CD4-positive, alpha-beta memory T cell (primary cell): ENCODE measurements at regions of chr12 and their contacts with region 1.

Region 1: DNA sequence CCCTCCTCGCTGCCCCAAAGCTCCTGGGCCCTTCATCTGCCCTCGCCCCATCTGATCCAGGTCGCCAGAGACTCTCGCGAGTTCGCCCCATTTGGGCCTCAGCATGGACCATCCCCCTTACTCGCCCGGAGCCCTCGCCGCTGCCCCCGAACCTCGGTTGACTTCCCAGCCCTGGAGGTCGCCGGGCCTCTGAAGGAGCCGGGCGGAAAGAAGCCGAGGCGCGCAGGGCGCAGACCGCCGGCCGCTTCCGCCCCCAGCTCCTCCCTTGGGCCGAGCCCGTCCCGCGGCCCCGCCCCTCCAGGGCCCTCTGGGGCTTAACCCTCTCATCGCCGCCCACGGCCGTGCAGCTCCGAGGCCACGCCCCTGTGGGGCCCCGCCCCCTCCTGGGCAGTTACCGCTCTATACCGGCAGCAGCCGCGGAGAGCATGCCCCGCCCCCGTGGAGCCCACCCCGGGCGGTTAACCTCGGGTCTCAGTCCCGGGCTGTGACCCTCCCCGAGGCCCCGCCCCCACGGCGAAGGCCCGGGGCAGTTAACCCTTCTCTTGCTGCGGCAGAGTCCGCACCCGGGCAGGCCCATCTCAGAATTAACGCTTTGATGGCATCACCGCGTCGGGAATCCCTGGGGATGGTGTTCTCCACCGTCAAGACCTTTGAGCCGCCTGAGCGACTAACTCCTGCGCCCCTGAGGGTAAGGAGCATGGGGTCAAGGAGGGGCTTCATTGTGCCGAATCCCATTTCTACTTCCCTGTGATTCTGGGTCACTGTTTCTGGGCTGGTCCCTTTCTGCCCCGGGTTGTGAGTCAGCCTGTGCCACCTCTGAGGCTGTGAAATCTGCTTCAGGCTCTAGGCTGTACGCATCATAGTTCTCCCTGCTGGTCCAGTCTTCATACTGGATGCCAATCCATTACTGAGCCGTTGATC is at the start of gene SPSB2:
- DNase-seq: peak; percentile 97 to 98 (median 98)
- H3K4me3 ChIP-seq: peak within 1 kb of the TSS; percentile 93 to 99
- H3K4me3 Mint-ChIP-seq: peak within 1 kb of the TSS; percentile 90 to 93 (median 92)
- H3K27ac ChIP-seq: peak within 1 kb of the TSS; percentile 87
- H3K27ac Mint-ChIP-seq: peak within 1 kb of the TSS; percentile 90 to 96 (median 93)
- H3K4me1 ChIP-seq: peaks cover 45% of the 10 kb centered on the region
- H3K4me1 Mint-ChIP-seq: peaks cover 32 to 66% (median 49%) of the 10 kb centered on the region in 4 donors
- H3K27me3 ChIP-seq: no peaks in the 10 kb centered on the region
- H3K27me3 Mint-ChIP-seq: no peaks in the 10 kb centered on the region
- total RNA-seq, gene SPSB2: 19.8 to 21.9 TPM

Region 2: DNA sequence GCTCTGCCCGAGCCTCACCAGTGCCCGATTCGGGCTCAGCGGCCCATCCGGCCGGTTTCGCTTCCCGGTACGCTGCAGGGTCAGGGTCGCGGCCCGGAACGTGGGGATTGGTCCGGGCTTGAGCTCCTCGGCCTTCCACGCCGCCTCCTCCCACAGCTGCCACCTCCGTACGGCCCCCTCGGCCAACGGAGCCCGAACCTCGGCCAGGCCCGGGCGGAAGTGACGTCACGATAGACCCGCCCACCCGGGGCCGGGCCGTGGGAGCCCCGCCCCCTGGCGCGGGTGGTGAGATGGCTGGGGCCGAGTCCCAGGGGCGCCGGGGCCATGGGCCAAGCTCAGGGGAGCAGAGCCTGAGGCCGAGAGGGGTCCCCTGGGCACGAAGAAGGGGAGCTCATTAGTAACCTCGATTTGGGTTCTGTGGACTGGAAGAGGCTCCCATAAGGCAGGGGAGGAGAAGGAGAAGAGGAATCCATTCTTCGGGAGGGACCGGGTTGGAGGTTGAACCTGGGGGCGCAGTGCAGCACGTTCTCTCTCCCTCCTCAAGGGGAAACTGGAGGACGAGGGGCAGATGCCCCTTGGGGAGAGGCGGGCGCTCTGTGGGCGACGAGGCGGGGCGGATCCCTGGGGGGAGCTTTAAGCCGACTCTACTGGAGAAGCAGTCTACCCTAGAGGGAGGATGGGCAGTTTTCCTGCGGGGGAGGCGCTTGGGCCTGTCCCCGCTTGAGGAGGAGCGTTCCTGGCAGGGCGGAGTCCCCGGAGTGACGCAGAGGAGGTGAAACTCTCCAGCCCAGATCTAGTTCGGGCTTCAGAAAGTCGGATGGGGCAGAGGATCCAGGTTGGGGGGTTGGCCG is 120.2 kb before region 1 on chr12 and contains the start of gene MLF2:
- CTCF ChIA-PET with region 1: interaction called, 10 read pairs
- POLR2A ChIA-PET with region 1: interaction called, 19 read pairs
- intact Hi-C with region 1: loop called (anchors 1 kb)
- DNase-seq: peak; percentile 96 to 98 (median 97)
- H3K4me3 ChIP-seq: peak within 1 kb of the TSS; percentile 62 to 77
- H3K4me3 Mint-ChIP-seq: peak within 1 kb of the TSS; percentile 94 to 98 (median 96)
- H3K27ac ChIP-seq: peak within 1 kb of the TSS; percentile 84
- H3K27ac Mint-ChIP-seq: peak within 1 kb of the TSS; percentile 99 to 100 (median 99)
- H3K4me1 ChIP-seq: peaks cover 13% of the 10 kb centered on the region
- H3K4me1 Mint-ChIP-seq: peaks cover 10 to 24% (median 17%) of the 10 kb centered on the region in 4 donors
- H3K27me3 ChIP-seq: no peaks in the 10 kb centered on the region
- H3K27me3 Mint-ChIP-seq: peaks cover 0 to 1% of the 10 kb centered on the region in 2 donors
- total RNA-seq, gene MLF2: 79.8 to 80.3 TPM

Region 3: GRCh38 chr12:6833189-6833890 is 40.0 kb before region 1 on chr12:
- CTCF ChIA-PET with region 1: interaction called, 10 read pairs
- POLR2A ChIA-PET with region 1: interaction called, 10 read pairs
- intact Hi-C with region 1: no loop called
- DNase-seq: no peak
- H3K4me3 ChIP-seq: no peak overlapping the region
- H3K4me3 Mint-ChIP-seq: peak overlapping the region in 1 of 8 donors; percentile 25
- H3K27ac ChIP-seq: no peak overlapping the region
- H3K27ac Mint-ChIP-seq: no peak overlapping the region
- H3K4me1 ChIP-seq: peaks cover 16% of the 10 kb centered on the region
- H3K4me1 Mint-ChIP-seq: peaks cover 2 to 12% (median 7%) of the 10 kb centered on the region in 4 donors
- H3K27me3 ChIP-seq: peaks cover 8% of the 10 kb centered on the region
- H3K27me3 Mint-ChIP-seq: peaks cover 1 to 8% of the 10 kb centered on the region in 2 donors

Region 4: DNA sequence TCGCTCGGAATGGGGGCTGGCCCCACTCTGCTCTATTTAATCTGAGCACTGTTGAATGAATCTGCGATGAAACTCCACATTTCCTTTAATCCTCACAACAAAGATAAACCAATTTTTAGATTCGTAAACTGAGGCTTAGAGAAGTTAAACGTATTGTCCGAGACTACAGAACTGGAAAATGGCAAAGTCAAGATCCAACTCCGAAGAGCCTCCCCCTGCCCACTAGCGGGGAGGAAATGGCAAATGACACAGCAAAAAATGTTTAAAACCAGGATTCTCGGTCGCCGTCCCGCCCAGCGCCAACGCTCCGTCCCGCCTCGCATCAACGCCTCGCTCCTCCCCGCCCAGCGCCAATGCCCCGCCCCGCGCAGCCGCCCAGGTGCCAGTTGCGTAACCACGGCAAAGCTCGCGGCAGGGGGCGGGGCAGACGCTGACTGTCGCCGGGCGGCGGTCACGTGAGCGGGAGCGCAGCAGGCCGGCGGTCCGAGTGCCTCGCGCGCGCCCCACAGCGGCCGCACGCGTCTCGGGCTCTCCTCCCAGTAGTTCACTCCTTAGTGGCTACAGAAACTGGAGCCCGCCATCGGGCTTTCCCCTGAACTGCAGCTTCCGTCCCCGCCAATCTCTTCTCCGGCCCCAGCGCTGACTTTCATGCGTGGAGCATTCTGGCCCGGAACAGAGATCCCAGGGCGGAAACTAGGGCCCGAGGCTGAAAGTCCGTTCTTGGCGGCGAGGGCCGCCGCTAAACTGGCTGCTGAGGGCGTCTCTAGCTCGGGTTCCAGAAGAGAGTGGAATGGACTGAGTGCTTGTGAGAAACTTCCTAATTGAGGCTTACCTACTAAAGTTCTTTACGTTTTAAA is 17.7 kb after region 1 on chr12:
- CTCF ChIA-PET with region 1: interaction called, 151 read pairs
- POLR2A ChIA-PET with region 1: interaction called, 133 read pairs
- intact Hi-C with region 1: loop called (anchors 1 kb)
- DNase-seq: peak; percentile 97 to 98 (median 98)
- H3K4me3 ChIP-seq: peak overlapping the region; percentile 74 to 93
- H3K4me3 Mint-ChIP-seq: peak overlapping the region; percentile 82 to 87 (median 85)
- H3K27ac ChIP-seq: peak overlapping the region; percentile 91
- H3K27ac Mint-ChIP-seq: peak overlapping the region; percentile 92 to 98 (median 95)
- H3K4me1 ChIP-seq: peaks cover 16% of the 10 kb centered on the region
- H3K4me1 Mint-ChIP-seq: peaks cover 5 to 15% (median 11%) of the 10 kb centered on the region in 4 donors
- H3K27me3 ChIP-seq: no peaks in the 10 kb centered on the region
- H3K27me3 Mint-ChIP-seq: no peaks in the 10 kb centered on the region

Region 5: DNA sequence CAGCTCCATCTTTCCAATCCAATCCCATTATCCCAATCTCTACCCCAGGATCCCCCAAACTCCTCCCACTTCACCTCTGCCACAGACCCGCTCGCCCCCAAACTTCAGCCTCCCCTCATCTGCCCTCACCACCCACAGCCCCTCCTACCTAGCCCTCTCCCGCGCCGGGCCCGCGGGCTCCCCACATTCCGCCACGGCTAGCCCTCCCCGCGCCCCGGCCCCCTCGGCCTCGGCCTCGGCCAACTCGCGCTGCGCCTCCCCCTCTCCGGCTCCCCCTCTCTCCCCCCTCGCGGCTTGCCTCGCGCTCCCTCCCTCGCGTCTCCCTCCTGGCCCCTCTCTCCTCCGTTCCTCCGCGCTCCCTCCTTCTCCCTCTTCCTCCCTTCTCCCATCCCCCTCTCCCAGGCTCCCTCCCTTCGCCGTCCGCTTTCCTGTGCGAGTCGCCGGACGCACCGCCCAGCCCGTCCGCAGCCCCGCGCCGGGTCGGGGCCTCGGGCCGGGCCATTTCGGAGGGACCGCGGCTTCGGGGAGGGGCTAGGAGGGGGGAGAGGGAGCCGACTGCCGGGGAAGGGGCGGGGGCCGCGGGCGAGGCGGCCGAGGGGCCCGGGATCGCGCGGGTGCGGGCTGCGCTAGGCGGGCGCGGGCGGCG is 54.1 kb after region 1 on chr12 and contains the start of gene ATN1:
- CTCF ChIA-PET with region 1: interaction called, 7 read pairs
- POLR2A ChIA-PET with region 1: interaction called, 10 read pairs
- intact Hi-C with region 1: no loop called
- DNase-seq: peak; percentile 37 to 65 (median 45)
- H3K4me3 ChIP-seq: peak within 1 kb of the TSS; percentile 57 to 65
- H3K4me3 Mint-ChIP-seq: peak within 1 kb of the TSS; percentile 88 to 94 (median 90)
- H3K27ac ChIP-seq: peak within 1 kb of the TSS; percentile 67
- H3K27ac Mint-ChIP-seq: peak within 1 kb of the TSS; percentile 91 to 97 (median 94)
- H3K4me1 ChIP-seq: peaks cover 43% of the 10 kb centered on the region
- H3K4me1 Mint-ChIP-seq: peaks cover 31 to 57% (median 43%) of the 10 kb centered on the region in 4 donors
- H3K27me3 ChIP-seq: no peaks in the 10 kb centered on the region
- H3K27me3 Mint-ChIP-seq: no peaks in the 10 kb centered on the region
- total RNA-seq, gene ATN1: 32.2 to 33.0 TPM

Region 6: GRCh38 chr12:6965026-6965661 is 91.8 kb after region 1 on chr12:
- CTCF ChIA-PET with region 1: interaction called, 14 read pairs
- POLR2A ChIA-PET with region 1: interaction called, 51 read pairs
- intact Hi-C with region 1: loop called (anchors 1 kb)
- DNase-seq: peak; percentile 85 to 87 (median 85)
- H3K4me3 ChIP-seq: no peak overlapping the region
- H3K4me3 Mint-ChIP-seq: peak overlapping the region in 1 of 8 donors; percentile 39
- H3K27ac ChIP-seq: peak overlapping the region; percentile 53
- H3K27ac Mint-ChIP-seq: peak overlapping the region; percentile 88 to 94 (median 93)
- H3K4me1 ChIP-seq: peaks cover 68% of the 10 kb centered on the region
- H3K4me1 Mint-ChIP-seq: peaks cover 32 to 63% (median 47%) of the 10 kb centered on the region in 4 donors
- H3K27me3 ChIP-seq: no peaks in the 10 kb centered on the region
- H3K27me3 Mint-ChIP-seq: no peaks in the 10 kb centered on the region